A673 (cell line): ENCODE measurements at regions of chr3 and their contacts with region 1.

Region 1: DNA sequence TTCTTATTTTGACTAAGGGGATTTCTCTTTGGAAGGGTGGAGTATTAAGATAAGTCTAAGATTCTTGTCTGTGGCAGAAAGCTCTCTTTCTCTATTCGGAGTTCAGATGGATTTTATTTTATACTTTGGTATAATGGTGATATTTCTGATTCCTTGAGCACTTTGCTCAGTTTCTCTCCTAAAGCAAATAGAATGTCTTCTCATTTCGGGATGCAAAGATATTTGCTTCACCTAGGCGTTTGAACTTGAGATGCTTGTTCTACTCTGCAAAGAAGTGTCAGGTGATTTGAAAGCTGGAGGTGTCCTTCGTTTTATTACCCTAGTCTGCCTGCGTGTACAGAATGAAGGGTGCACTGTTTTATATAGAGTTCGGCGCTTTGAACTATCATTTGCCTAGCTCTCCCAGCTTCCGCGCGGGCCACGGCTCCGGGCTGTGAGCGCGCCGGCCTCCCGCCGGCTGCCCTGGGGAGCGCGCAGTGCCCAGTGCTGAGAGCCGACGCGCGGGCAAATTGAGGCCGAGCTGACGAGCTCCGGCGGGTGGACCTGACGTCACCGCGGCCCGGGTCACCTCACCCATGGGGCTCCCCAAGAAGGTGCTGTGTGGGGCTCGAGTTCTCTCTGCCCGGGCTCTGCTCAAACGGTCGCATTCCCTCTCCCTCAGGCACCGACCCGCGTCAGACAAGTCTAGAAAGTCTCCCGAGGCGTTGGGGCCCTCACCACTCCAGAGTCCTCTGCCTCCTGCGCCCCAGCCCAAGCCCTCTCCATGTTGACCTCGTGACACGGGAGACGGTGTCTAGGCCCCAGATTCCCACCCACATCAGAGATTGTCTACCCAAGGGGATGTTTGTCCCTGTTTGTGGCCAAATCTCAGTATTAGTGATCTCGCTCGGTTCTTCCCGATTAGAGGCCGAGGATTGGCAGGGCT is 7.5 kb downstream of the SOX2 start:
- DNase-seq: no peak
- H3K4me3 ChIP-seq: peak overlapping the region; percentile 12
- H3K27ac ChIP-seq: peak overlapping the region; percentile 57
- H3K4me1 ChIP-seq: peaks cover 27% of the 10 kb centered on the region
- H3K27me3 ChIP-seq: no peaks in the 10 kb centered on the region
- CTCF ChIP-seq: no peak

Region 2: DNA sequence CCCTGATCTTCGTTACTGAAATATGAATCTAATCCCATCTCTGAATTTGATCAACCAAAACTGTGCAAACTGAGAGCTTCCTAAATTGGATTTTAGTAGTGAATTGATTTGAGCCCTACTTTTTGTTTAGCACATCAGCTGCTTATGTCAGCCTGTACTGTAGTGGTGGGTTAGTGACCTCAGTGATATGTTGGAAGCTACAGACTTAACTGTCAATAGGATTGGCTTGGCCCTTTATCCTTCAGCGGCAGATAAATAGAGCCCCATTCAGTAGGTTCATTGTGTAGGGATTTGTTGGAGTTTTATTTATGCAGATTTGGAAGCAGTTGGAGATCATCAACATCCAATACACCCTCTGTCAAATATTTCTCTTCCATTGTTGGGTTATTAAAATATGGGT is 402.2 kb after region 1 on chr3:
- CTCF ChIA-PET with region 1: no interaction called
- POLR2A ChIA-PET with region 1: no interaction called
- intact Hi-C with region 1: loop called (anchors 5 kb)
- DNase-seq: no peak
- H3K4me3 ChIP-seq: no peak overlapping the region
- H3K27ac ChIP-seq: no peak overlapping the region
- H3K4me1 ChIP-seq: peaks cover 48% of the 10 kb centered on the region
- H3K27me3 ChIP-seq: no peaks in the 10 kb centered on the region
- CTCF ChIP-seq: no peak